Activated naive CD4-positive, alpha-beta T cell treated with anti-CD3 and anti-CD28 coated beads for 36 hours (primary cell): ENCODE measurements at regions of chr6 and their contacts with region 1.

Region 1: DNA sequence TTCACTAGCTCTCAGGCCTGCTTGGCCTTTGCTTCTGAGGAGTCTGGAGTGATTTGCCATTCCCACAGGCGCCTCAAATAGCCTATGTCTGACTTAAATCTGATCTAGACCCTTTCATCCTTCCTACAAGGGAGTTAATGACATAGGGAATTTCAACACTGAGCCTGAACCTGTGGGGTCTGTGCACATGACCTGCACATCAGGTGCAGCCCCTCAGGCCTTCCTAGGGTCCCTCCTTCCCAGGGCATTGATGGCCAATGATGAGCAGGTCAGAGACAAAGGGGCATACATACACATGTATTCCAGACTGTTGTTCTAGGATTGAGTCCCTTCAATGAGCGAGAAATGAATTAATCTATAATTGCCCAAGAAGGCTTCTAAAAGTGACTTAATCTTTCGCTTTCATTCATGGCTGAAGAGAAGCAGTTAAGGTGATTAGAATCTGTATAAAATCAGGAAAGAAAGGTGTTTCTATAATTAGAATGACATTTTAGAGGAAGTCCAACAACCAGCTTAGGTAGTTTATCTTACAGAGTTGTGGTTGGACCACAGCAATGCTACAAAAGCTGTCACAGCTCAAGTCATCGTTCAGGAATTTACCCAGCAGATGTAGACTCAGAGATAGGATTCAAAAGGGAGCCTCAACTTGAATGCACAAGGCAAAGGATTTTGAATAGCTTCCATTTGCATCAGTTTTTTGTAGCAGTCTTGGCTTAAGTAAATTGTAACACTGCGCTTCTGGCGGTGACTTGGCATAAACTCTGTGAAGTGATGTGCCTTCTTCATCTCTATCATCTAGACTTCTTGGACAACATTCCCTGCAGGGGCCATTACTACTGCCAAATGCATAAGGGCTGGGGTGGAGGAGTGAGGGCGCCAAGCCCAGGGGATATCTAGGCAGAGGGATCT is 27.0 kb upstream of the TBC1D7 start:
- DNase-seq: peak; percentile 70
- H3K4me3 Mint-ChIP-seq: peak overlapping the region; percentile 63
- H3K27ac Mint-ChIP-seq: peak overlapping the region; percentile 99
- H3K4me1 Mint-ChIP-seq: peaks cover 45% of the 10 kb centered on the region
- H3K27me3 Mint-ChIP-seq: no peaks in the 10 kb centered on the region

Region 2: DNA sequence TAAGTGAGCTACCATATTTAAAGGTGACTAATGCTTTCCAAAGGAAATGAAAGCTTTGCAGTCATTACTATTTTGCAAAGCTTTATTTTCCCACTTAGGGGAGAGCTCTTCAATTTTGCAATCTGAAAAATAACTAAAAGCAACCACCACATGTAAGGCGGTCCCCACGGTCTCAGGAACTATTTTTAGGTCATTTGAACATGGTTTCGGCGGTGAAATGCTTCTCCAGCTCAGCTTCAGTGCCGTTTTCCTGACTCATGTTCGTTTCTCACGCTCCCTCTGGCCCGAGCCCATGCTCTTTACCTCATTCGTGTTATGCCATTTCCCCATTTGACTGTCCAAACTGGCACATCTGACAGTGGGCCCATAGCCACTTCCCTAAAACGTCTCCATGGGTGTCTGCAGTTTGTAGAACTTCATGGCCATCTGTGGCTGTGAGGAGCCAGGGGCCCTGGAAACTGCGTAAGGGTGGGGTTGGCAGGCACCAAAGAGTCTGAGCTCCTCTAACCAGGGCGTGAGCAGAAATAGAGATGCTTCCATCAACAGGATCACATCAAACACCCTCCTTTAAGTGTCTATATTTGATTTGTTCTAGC is 1623.2 kb before region 1 on chr6:
- CTCF ChIA-PET with region 1: no interaction called
- intact Hi-C with region 1: loop called (anchors 1 kb)
- DNase-seq: peak; percentile 87
- H3K4me3 Mint-ChIP-seq: peak overlapping the region; percentile 3
- H3K27ac Mint-ChIP-seq: peak overlapping the region; percentile 92
- H3K4me1 Mint-ChIP-seq: peaks cover 63% of the 10 kb centered on the region
- H3K27me3 Mint-ChIP-seq: no peaks in the 10 kb centered on the region

Region 3: GRCh38 chr6:13079096-13079723 is 276.1 kb before region 1 on chr6:
- CTCF ChIA-PET with region 1: no interaction called
- intact Hi-C with region 1: no loop called
- DNase-seq: no peak
- H3K4me3 Mint-ChIP-seq: no peak overlapping the region
- H3K27ac Mint-ChIP-seq: no peak overlapping the region
- H3K4me1 Mint-ChIP-seq: no peaks in the 10 kb centered on the region
- H3K27me3 Mint-ChIP-seq: peaks cover 9% of the 10 kb centered on the region

Region 4: DNA sequence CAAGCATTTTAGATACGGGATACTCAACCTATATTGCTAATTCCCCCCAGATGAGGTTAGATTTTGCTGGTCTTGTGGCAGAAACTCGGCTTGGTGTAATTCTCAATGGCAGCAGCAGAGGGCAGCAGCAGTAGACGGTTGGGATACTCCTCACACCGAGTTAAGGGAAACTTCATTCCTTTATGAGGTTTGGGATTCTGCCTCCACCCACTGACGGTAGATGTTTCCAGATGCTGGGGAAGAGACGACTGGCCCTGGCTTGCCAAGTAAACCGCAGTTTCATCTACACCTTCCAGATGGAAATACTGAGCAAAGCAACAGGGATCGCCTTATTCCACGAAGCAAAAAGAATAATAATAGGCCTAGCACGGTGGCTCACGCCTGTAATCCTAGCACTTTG is 18.7 kb before region 1 on chr6:
- CTCF ChIA-PET with region 1: interaction called, 9 read pairs
- intact Hi-C with region 1: loop called (anchors 1 kb)
- DNase-seq: peak; percentile 82
- H3K4me3 Mint-ChIP-seq: no peak overlapping the region
- H3K27ac Mint-ChIP-seq: no peak overlapping the region
- H3K4me1 Mint-ChIP-seq: peaks cover 8% of the 10 kb centered on the region
- H3K27me3 Mint-ChIP-seq: no peaks in the 10 kb centered on the region

Region 5: DNA sequence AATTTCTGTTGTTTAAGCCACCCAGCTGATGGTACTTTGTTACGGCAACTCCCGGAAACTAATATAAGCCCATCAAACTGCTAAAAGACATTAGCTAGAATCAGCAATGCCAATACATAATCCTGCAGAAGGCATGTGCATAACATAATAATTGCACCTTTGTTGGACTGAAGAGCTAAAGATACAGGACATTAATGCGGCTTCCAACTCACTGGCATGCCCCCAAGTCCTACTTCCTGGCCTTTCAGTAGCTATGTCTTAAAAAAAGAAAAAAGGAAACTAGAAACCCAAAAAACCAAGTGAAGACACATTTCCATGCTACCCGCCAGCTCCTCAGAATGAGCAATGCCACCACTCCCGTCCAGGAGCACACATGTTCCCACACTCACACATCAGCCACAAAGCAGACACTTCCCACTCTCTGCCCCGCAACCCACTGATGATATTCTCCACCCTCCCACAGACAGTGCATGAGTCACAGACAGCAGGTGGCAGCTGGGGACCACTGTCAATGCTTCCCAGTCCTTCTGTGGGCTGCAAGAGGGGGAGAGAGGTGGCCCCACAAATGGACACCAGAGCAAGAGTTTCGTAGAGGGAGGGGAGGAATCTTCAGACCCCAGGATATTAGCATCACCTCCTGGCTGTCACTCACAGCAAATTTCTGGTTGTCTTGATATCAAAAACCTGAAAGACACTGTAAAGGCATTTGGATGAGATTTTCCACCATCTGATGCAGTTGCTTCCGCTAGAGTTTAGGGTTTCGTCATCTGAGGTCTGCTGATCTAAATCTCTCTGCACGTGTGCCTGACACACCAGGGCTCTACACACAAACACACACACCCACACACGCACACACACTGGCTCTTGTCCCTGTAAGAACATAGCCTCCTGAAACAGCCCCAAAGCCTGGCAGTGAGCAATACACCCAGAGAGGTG is 99.3 kb after region 1 on chr6:
- CTCF ChIA-PET with region 1: interaction called, 4 read pairs
- intact Hi-C with region 1: loop called (anchors 1 kb)
- DNase-seq: peak; percentile 86
- H3K4me3 Mint-ChIP-seq: peak overlapping the region; percentile 46
- H3K27ac Mint-ChIP-seq: peak overlapping the region; percentile 93
- H3K4me1 Mint-ChIP-seq: peaks cover 45% of the 10 kb centered on the region
- H3K27me3 Mint-ChIP-seq: no peaks in the 10 kb centered on the region

Region 6: GRCh38 chr6:13614926-13615798 is 259.9 kb after region 1 on chr6 and contains the start of gene NOL7:
- CTCF ChIA-PET with region 1: no interaction called
- intact Hi-C with region 1: loop called (anchors 5 kb)
- DNase-seq: peak; percentile 99
- H3K4me3 Mint-ChIP-seq: peak within 1 kb of the TSS; percentile 99
- H3K27ac Mint-ChIP-seq: peak within 1 kb of the TSS; percentile 93
- H3K4me1 Mint-ChIP-seq: peaks cover 51% of the 10 kb centered on the region
- H3K27me3 Mint-ChIP-seq: no peaks in the 10 kb centered on the region
- total RNA-seq, gene NOL7: 79.5 to 80.8 TPM

Region 7: GRCh38 chr6:13767121-13767808 is 412.0 kb after region 1 on chr6:
- CTCF ChIA-PET with region 1: no interaction called
- intact Hi-C with region 1: loop called (anchors 1 kb)
- DNase-seq: peak; percentile 71
- H3K4me3 Mint-ChIP-seq: peak overlapping the region; percentile 78
- H3K27ac Mint-ChIP-seq: no peak overlapping the region
- H3K4me1 Mint-ChIP-seq: peaks cover 43% of the 10 kb centered on the region
- H3K27me3 Mint-ChIP-seq: peaks cover 1% of the 10 kb centered on the region

Region 8: DNA sequence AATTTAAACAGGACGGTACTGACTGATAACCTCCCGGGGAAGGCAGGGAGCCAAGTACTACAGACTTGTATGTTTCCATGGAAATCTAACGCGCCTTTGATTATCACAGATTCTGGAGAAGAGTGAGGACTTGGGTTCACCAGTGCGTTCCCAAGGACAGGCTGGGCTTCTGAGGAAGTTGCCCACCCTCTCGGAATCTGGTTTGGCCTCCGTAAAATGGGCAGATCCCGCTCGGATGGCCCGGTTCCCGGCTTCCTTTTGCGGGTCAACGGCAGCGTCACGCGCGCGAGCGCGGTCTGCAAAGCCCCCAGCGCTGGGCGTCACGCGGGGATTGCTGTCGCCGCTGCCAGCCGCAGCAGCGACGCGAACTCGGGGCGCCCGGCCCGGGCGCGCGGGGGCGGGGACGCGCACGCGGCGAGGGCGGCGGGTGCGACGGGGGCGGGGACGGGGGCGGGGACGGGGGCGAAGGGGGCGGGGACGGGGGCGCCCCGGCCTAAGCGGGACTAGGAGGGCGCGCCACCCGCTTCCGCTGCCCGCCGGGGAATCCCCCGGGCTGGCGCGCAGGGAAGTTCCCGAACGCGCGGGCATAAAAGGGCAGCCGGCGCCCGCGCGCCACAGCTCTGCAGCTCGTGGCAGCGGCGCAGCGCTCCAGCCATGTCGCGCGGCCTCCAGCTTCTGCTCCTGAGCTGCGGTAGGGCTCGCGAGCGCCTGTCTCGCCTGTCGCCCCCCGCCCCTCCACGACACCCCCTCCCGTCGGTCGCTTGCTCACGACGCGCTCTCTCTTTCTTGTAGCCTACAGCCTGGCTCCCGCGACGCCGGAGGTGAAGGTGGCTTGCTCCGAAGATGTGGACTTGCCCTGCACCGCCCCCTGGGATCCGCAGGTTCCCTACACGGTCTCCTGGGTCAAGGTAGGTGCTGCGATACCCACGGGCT is 762.1 kb after region 1 on chr6 and contains the start of gene CD83:
- CTCF ChIA-PET with region 1: no interaction called
- intact Hi-C with region 1: loop called (anchors 5 kb)
- DNase-seq: peak; percentile 75
- H3K4me3 Mint-ChIP-seq: peak within 1 kb of the TSS; percentile 93
- H3K27ac Mint-ChIP-seq: peak within 1 kb of the TSS; percentile 87
- H3K4me1 Mint-ChIP-seq: peaks cover 36% of the 10 kb centered on the region
- H3K27me3 Mint-ChIP-seq: peaks cover 2% of the 10 kb centered on the region
- total RNA-seq, gene CD83: 11.9 to 13.8 TPM